ENCODE measurements at regions of chr2 and their contacts with region 1.

Region 1: GRCh38 chr2:43169987-43170386 is 56.4 kb downstream of the ZFP36L2 start:
- DNase-seq: peak; percentile 74
- ATAC-seq: peak; percentile 24
- H3K4me3 Mint-ChIP-seq: peak overlapping the region; percentile 61
- H3K27ac Mint-ChIP-seq: peak overlapping the region; percentile 89
- H3K4me1 Mint-ChIP-seq: peaks cover 83% of the 10 kb centered on the region
- H3K27me3 Mint-ChIP-seq: no peaks in the 10 kb centered on the region

Region 2: DNA sequence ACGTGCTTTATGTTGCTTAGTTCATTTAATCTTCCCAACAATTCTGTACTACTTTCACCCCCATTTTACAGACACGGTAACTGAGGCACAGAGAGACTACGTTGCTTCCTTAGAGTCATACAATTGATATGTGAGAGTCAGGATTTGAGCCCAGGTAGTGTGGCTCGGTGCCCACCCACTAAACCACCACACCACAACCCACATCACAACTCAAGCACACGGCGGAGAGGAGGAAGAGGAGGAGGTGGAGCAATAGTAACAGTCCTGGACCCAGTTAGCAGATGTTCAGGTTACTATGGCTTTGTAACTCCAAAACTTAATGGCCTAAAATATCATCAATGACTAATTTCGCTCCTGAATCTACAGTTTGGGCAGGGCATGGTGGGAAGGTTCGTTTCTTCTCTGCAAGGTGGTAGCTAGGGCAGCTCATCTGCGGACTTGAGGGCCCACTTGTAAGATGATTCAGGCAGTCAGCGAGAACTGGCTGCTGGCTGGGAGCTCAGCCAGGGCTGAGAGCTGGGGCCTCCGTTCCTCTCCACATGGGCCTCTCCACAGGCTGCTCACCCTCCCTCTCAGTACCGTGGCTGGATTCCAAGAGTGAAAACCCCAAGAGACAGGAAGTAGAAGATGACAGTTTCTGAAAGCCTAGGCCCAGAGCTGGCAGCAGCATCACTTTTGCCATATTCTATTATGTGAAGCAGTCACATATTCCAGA is 110.6 kb before region 1 on chr2:
- CTCF ChIA-PET with region 1: no interaction called
- POLR2A ChIA-PET with region 1: no interaction called
- DNase-seq: peak; percentile 78
- ATAC-seq: peak; percentile 90
- H3K4me3 Mint-ChIP-seq: peak overlapping the region; percentile 16
- H3K27ac Mint-ChIP-seq: peak overlapping the region; percentile 81
- H3K4me1 Mint-ChIP-seq: peaks cover 26% of the 10 kb centered on the region
- H3K27me3 Mint-ChIP-seq: peaks cover 16% of the 10 kb centered on the region

Region 3: GRCh38 chr2:43139996-43140621 is 29.9 kb before region 1 on chr2:
- CTCF ChIA-PET with region 1: interaction called, 242 read pairs
- POLR2A ChIA-PET with region 1: interaction called, 16 read pairs
- DNase-seq: peak; percentile 81
- ATAC-seq: peak; percentile 51
- H3K4me3 Mint-ChIP-seq: peak overlapping the region; percentile 52
- H3K27ac Mint-ChIP-seq: peak overlapping the region; percentile 91
- H3K4me1 Mint-ChIP-seq: peaks cover 79% of the 10 kb centered on the region
- H3K27me3 Mint-ChIP-seq: no peaks in the 10 kb centered on the region

Region 4: DNA sequence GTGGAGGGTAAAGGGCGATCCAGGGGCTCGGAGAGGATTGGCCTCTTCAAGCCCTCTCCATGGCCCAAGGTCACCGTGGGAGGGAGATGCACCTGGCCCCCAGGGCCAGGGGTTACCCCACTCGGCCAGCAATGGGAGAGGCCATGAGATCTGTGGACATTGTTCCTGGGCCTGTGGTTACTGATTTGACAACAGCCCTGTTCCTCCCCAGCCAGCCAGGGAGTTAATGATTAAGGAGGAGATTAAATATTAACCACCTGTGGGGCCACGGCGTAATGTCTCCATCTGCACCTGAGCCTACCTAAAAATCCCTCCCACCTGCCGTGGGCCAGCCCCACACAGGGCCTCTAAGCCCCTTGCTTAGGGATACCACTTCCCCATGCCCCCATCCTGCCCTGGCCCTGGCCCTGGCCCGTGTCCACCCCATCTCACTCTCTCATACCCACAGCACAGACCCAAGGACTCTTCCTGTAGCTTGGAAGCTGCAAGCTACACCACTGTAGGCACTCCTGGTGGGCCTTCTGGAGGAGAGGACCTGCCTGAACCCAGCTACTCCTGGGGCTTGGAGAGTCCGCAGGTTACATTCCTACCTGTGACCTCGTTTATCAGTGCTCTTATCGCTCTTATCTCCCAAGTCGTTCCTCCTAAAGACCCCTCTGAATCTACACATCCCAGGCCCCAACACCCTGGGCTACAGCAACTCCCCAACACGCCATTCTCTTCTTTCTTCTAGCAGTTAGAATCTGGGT is 24.3 kb after region 1 on chr2:
- CTCF ChIA-PET with region 1: interaction called, 45 read pairs
- POLR2A ChIA-PET with region 1: interaction called, 15 read pairs
- DNase-seq: no peak
- ATAC-seq: peak; percentile 14
- H3K4me3 Mint-ChIP-seq: peak overlapping the region; percentile 77
- H3K27ac Mint-ChIP-seq: peak overlapping the region; percentile 94
- H3K4me1 Mint-ChIP-seq: peaks cover 65% of the 10 kb centered on the region
- H3K27me3 Mint-ChIP-seq: no peaks in the 10 kb centered on the region

Region 5: DNA sequence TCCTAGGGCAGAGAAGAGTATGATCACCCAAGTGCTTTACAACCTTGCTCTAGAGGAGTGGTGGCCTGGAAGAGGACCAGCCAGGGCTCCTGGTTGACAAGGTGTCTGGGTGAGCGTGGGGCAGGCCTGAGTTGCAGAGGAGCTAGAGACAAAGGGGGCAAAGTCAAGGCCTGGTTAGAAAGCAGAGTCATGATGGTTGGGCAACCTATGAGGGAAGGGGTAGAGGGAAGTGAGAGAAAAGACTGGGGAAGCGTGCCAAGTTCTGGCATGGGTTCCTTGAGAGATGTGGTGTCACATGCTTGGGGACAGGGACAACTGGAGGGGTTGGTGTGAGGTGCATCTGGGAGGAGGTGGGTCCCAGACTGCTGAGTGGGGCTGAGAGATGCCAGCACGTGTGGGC is 42.9 kb after region 1 on chr2:
- CTCF ChIA-PET with region 1: interaction called, 103 read pairs
- POLR2A ChIA-PET with region 1: interaction called, 248 read pairs
- DNase-seq: no peak
- ATAC-seq: no peak
- H3K4me3 Mint-ChIP-seq: no peak overlapping the region
- H3K27ac Mint-ChIP-seq: peak overlapping the region; percentile 26
- H3K4me1 Mint-ChIP-seq: peaks cover 44% of the 10 kb centered on the region
- H3K27me3 Mint-ChIP-seq: no peaks in the 10 kb centered on the region